Head of caudate nucleus (tissue), 42 donors: ENCODE measurements at regions of chr1 and their contacts with region 1.

Region 1: DNA sequence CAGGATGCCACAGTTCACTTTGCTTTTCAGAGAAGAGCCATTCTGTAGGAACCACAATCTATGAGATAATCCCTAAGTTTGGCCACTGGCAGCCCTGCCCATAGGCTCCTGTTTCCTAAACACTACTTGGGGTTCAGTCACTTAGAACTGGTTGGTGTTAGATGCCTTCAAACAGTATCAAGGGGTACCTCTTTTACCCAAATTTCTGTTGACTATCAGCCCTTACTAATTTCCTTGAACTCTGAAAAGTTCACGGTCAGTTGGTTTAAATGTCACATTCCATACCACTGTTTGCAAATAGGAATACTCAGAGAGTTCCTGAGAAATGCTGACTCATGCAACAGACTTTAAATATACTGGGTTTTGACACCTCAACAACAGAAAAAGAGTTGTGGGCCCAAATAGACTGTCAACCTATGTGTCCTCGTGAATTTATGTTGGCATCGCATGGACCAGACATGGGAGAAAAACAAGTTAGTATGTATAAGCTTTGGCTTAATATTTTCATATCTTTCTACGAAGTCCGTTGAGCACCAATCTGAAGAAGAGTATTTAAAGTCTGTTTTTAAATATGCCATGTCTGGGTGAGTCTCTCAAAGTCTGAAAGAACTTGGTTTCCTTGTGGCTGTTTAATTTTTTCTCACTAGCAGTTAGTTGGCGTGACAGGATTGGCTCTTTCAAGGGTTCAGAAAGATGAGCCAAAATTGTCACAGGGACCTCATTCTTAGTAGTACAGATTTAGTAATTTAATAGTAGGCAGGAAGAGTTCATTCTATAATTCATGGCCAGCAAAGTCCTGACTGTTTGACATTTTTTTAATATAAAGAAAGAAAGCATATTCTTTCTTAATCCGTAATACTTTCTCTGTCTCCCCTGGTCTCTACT is 56.5 kb upstream of the ZNF326 start:
- DNase-seq: no peak

Region 2: DNA sequence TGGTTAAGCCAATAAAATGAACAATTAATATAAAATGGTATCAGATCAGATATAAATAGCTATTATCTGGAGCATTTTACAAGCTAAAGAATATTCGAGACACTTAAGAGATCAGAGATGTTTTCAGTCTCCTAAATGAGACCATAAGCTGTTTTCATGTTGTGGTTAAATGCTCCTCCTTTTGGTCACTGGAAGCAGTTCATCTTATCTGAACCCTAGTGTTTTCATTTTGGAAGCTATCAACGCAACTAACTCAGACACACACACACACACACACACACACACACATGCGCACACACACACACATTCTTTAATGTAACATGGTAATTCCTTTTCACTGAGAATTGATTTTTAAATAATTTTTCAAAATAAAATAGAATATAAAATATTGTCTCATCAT is 315.5 kb before region 1 on chr1:
- intact Hi-C with region 1: no loop called
- DNase-seq: no peak

Region 3: DNA sequence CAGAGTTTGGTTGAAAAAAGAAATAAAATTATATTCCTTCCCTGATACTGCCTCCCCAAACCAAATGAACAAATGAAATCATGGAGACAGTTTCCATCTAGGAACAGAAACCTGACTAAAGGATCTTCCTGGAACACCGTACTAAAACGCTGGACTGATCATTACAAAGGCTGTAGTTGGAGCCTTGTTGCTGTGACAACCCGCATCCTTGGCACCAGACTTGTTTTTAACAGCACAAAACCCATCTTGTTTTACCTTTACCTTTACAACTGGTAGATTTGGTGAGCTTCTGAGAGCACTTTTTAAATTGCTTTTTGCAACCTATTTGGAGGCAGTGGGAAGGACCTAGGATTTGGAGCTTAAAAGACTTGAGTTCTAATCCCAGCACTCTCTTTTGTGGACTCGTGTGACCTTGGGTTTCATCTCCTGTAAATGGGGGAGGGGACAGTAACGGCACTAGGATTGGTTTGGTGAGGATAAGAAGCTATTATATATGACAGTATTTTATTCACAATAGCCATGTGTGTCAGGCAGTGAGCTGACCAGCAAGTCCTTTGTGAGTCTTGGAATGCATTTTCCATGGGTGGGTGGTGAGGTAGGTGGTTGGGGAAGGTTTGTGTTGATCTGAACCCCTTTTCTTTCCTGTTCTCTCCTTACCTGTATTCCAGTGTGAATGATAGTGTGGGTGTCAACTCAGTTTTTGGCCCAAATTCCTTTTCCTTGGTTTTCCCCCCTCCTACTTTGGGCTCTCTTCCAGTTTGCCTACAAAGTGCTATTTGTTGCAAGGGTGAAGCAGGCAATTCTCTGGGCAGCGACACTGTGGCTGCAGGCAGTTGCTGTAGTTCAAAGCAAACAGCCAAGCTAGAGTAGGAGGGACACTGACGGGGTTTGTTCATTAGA is 105.0 kb before region 1 on chr1:
- intact Hi-C with region 1: loop called (anchors 5 kb)
- DNase-seq: peak; percentile 50 to 91 (median 79)

Region 4: DNA sequence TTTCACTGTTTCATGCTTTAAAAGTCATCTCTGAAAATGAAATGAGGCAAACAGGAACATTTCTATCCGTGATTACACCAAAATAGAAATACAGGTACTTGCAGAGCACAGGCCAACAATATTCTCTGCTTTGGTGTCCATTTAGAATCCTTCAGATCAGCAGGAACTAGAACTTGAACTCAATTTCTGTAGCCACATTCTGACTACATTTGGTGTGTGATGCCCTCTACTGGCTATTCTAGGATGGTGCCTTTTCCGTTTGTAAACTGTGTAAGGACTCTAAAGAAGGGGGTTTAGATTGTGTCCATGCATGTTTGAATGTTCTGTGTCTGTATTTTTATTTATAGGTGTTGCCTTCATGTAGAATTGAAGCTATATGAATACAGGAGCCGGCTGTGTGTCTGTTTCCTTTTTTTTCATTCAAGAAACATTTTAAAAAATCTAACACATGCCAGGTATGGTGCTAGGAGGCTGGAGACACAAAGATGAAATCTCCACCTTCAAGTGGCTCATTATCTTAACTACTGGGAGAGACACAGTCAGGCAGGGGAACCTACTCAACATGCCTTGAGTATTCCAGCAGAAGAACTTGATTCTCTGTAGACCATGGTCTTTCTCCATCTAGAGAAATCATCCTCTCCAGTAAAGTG is 48.9 kb after region 1 on chr1:
- intact Hi-C with region 1: loop called (anchors 10 kb)
- DNase-seq: peak in 30 of 42 donors; percentile 30 to 88 (median 70)

Region 5: DNA sequence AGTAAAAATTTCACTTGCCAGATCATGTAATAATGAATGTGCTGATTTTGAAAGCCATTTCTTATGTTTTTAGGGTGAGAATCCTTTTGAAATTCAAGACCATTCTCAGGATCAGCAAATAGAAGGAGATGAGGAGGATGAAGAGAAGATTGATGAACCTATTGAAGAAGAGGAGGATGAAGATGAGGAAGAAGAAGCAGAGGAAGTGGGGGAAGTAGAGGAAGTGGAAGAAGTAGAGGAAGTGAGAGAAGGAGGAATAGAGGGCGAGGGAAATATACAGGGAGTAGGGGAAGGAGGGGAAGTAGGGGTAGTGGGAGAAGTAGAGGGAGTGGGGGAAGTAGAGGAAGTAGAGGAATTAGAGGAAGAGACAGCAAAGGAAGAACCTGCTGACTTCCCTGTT is 88.9 kb after region 1 on chr1:
- intact Hi-C with region 1: no loop called
- DNase-seq: no peak